Tibial artery (tissue), 4 donors: ENCODE measurements at regions of chr5 and their contacts with region 1.

Region 1: DNA sequence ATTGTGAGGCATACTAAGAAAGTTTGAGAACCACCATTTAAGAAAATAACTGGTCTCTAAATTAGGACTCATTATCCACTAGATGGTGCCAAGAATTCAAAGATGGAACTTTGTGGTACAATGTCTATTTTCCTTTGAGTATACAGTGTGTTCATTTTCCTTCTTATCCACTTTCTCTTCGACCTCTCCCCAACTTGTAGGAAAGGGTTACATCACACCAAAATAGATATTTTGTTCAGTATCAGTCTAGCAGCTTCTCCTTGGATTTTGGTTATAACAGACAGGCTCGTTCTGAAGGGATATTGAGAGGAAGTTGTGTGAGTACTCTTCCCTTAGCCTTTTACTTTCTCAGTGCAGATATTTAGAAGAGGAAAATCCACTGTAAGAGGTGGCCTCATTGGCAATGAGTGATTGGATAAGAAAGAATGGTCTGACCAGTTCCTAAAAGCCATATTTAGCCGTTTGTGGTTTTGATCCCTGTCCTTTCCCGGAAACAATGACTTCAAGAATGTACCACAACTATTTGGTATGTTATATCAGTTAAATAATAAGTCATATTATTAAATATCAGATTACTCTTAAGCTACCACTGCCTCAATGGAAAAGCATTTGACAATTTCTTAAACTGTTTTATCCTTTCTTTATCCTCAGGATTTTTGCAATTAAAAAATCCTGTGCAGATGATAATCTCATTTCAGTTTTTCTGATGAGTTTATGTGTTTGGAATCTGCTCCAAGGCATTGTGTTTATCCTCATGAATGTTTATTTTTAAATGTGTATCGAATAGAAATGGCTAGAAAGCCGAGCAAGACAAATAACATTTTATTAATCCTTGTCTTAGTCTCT is 69.0 kb upstream of the GRAMD2B start:
- DNase-seq: no peak
- H3K4me3 ChIP-seq: peak overlapping the region in 1 of 2 donors; percentile 34
- H3K27ac ChIP-seq: peak overlapping the region; percentile 29 to 48
- H3K4me1 ChIP-seq: peaks cover 0 to 19% (median 6%) of the 10 kb centered on the region in 4 donors
- H3K27me3 ChIP-seq: no peaks in the 10 kb centered on the region
- CTCF ChIP-seq: peak; percentile 62 to 70

Region 2: DNA sequence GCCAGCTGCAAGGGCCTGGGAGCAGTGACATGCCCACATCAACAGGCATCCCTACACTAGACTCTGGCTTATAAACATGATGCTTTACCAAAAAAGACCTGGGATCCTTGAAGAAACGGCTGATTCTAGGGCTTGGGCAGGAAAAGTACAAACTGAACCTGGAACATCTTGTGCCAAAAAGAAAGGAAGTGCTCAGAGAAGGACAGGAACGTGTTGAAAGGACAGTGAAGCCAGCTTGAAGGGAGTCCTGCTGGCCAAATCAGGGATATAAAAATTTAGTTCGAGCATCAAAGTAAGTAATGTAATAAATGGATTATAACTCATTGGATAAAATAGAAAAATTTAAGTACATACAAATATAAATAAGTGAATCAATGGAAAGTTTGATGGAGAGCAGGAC is 182.6 kb after region 1 on chr5:
- intact Hi-C with region 1: loop called (anchors 2 kb)
- DNase-seq: no peak
- H3K4me3 ChIP-seq: no peak overlapping the region
- H3K27ac ChIP-seq: no peak overlapping the region
- H3K4me1 ChIP-seq: peaks cover 0 to 16% (median 6%) of the 10 kb centered on the region in 4 donors
- H3K27me3 ChIP-seq: no peaks in the 10 kb centered on the region
- CTCF ChIP-seq: peak in 1 of 2 experiments; percentile 13